ENCODE measurements at regions of chr3 and their contacts with region 1.

Region 1: DNA sequence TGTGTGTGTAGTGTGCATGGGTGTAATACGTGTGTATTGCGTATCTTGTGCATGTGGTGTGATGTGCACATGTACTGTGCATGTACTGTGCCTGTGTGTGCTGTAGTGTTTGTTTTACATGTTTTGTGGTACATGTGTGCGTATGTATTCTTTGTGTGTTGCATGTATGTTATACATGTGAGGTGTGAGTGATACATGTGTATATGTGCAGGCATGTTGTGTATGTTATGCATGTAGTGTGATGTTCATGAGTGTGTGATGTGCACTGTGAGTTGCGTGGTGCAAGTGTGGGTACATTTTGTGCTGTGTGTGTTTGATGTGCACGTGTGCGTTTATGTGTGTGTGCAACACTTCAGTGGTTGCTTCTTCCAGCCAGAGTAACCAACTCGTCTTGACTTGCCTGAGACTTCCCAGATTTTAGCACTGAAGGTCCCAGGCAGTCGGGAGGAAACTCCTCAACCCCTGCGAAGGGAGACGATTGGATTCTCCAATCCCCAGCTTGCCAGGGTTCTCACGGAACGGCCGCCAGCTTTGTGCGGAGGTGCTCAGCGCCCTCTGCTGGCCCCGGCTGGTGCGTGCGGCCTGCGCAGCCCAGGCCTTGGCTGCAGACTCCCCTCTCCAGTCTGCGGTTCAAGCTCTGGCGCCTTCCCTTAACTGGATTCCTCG is 3.6 kb downstream of the GALNT15 start:
- DNase-seq: peak; percentile 85
- ATAC-seq: peak; percentile 87
- H3K4me3 Mint-ChIP-seq: no peak overlapping the region
- H3K27ac Mint-ChIP-seq: no peak overlapping the region
- H3K4me1 Mint-ChIP-seq: no peaks in the 10 kb centered on the region
- H3K27me3 Mint-ChIP-seq: peaks cover 18% of the 10 kb centered on the region

Region 2: DNA sequence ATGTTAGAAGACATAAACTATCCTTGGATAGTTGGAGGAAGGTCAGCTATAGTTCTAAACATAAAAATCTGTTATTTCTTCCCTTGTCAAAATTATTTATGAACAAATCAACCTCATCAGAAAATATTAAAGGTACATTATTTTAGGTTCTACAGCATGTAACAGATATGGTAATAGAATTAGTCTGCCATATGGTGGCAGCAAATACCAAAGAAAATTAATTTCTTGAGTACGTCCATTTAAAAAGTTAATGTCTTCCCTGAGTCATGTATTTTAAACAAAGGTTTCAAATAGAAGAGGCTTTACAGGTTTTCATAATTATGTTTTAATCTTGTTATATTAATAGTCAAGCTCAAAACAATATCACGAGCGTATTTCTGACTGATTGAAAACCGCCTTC is 362.4 kb before region 1 on chr3:
- CTCF ChIA-PET with region 1: no interaction called
- POLR2A ChIA-PET with region 1: no interaction called
- intact Hi-C with region 1: loop called in 1 of 2 experiments (anchors 2 kb)
- DNase-seq: no peak
- ATAC-seq: no peak
- H3K4me3 Mint-ChIP-seq: no peak overlapping the region
- H3K27ac Mint-ChIP-seq: no peak overlapping the region
- H3K4me1 Mint-ChIP-seq: peaks cover 41% of the 10 kb centered on the region
- H3K27me3 Mint-ChIP-seq: no peaks in the 10 kb centered on the region

Measured in activated CD4-positive, alpha-beta T cell treated with anti-CD3 and anti-CD28 coated beads for 36 hours (primary cell).